ENCODE measurements at regions of chr3 and their contacts with region 1.

Region 1: DNA sequence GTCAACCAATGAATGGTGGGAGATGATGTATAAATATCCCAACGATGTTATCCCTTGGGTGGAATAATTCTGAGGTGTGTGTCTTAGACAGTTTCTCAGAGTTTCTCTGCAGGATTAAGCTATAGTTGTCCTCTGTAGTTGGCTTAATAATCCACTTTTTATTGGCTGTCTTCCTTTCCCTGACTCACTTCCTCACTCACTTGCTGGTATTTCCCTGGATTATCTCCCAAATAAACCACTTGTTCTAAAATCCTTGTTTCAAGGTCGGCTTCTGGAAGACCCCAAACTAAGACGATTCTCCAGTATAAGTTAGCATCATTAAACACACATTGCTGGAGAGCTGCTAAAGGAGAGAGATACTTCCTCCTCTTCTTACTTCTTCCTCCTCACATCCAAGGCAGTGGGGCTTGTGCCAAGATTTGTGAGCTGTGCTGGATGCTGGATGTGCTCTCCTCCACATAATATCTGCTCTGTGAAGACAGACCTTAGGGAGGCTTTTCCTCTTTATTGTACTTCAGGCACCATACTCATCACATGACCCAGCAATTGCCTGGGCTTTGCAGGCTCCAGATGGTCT is 22.5 kb upstream of the ROPN1 start:
- DNase-seq: no peak
- H3K4me3 ChIP-seq: no peak overlapping the region
- H3K27ac ChIP-seq: no peak overlapping the region
- H3K27me3 ChIP-seq: peaks cover 10% of the 10 kb centered on the region
- CTCF ChIP-seq: no peak

Region 2: DNA sequence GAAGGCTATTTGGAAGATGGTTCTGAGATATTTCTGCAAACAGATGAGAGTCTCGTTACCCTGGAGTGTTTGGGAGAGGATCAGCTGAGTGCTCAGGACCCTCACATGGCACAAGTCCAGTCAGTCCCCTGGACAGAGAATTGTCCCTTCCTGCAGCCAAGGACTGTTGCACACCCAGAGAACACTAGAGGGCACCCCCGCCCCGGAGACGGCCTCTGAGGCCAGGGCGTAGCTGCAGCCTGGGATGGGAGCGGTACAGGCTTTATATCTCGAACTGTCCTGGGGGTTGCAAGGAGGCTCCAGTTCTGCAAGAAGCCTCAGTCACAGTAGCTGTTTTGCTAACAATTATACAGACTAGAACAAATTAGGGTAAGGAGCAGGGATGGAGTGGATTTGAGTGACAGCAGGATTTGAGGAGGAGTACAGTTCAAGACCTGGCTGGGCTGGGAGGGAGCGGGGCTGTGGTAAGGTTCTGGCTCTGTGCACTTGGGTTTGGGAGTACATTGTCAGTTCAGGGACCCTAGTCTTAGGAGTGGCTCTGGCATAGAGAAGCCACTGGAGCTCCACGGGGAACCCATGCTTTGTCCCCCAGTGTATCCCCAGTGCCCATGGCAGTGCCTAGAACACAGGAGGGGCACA is 362.0 kb before region 1 on chr3:
- CTCF ChIA-PET with region 1: no interaction called
- POLR2A ChIA-PET with region 1: no interaction called
- DNase-seq: no peak
- H3K4me3 ChIP-seq: no peak overlapping the region
- H3K27ac ChIP-seq: peak overlapping the region; percentile 94
- H3K27me3 ChIP-seq: no peaks in the 10 kb centered on the region
- CTCF ChIP-seq: peak; percentile 88

Region 3: DNA sequence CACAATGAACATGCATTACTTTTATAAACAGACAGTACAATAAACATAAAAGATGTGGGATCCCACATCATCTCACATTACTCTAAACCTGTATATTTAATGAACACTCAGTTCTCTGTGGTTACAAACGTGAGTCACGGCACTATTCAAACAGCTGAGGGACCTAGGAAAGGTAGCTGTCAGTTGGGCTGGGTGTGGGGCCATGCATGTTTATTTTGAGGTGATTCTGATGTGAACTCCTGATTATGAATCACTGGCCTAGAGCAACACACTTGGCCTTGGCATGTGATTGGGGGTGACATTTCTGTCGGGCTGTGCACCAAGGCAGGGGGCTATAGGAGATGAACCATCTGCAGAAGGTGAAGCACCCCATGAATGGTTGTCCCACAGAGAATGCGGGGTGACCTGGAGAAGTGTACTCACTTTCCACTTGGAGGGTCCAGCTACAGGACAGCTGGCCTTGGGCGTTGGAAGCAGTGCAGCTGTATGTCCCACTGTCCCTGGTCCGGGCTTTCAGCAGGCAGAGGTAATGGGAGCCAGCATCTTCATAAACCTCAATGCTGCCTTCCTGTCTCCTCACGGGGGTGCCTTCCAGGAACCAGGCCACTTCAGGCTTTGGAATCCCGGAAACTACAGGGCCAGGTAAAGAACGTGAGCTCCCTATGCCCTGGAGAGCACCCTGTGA is 281.8 kb before region 1 on chr3:
- CTCF ChIA-PET with region 1: interaction called, 11 read pairs
- POLR2A ChIA-PET with region 1: no interaction called
- DNase-seq: peak; percentile 88
- H3K4me3 ChIP-seq: no peak overlapping the region
- H3K27ac ChIP-seq: peak overlapping the region; percentile 91
- H3K27me3 ChIP-seq: no peaks in the 10 kb centered on the region
- CTCF ChIP-seq: no peak

Region 4: GRCh38 chr3:123953735-123954134 is 60.7 kb before region 1 on chr3:
- CTCF ChIA-PET with region 1: no interaction called
- POLR2A ChIA-PET with region 1: no interaction called
- DNase-seq: no peak
- H3K4me3 ChIP-seq: no peak overlapping the region
- H3K27ac ChIP-seq: no peak overlapping the region
- H3K27me3 ChIP-seq: no peaks in the 10 kb centered on the region
- CTCF ChIP-seq: no peak

Region 5: DNA sequence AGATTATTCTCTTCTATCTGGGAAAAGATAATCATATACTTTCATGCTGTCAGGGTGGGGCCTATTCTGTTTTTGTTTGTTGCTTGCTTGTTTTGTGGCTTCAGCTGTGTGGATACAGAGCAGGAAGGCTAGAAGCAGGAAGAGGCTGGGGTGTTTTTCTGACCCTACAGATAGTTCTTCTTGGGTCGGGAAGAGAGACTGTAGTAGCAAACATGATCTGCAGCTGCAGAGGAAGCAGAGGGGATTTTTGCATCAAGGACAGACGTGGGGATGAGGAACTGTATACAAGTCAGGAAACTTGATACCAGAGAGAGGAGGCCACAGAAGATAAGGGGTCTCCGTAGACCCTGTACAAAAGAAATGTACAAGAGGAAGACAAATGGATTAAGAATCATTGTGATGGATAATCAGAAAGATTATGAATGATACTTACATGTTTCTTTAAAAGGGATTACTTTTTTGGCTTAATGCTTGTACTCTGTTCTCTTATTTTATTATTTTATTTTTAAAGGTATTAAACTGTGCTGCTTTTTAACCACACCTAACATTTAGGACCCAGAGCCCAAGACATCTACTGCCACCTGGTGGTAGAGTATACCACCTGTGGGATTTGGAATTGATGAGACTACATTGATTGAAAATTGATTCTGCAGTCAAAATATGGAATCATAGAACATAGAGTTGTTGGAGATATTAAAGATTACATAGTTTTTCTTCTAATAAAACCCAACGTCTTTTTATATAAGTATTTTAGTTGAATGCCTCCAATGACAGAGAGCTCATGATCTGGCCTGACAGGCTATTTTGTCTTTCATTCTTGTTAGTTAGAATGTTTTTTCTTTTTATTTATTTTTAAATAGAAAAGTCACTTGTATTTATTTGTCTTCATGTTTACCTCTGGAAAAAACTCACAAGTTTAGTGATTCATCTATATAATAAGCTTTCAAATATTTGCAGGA is 64.8 kb after region 1 on chr3:
- CTCF ChIA-PET with region 1: interaction called, 12 read pairs
- POLR2A ChIA-PET with region 1: no interaction called
- DNase-seq: no peak
- H3K4me3 ChIP-seq: no peak overlapping the region
- H3K27ac ChIP-seq: no peak overlapping the region
- H3K27me3 ChIP-seq: peaks cover 7% of the 10 kb centered on the region
- CTCF ChIP-seq: peak; percentile 81

Region 6: GRCh38 chr3:124281453-124282316 is 267.2 kb after region 1 on chr3:
- CTCF ChIA-PET with region 1: interaction called, 36 read pairs
- POLR2A ChIA-PET with region 1: no interaction called
- DNase-seq: no peak
- H3K4me3 ChIP-seq: no peak overlapping the region
- H3K27ac ChIP-seq: no peak overlapping the region
- H3K27me3 ChIP-seq: peaks cover 15% of the 10 kb centered on the region
- CTCF ChIP-seq: peak; percentile 70

Region 7: DNA sequence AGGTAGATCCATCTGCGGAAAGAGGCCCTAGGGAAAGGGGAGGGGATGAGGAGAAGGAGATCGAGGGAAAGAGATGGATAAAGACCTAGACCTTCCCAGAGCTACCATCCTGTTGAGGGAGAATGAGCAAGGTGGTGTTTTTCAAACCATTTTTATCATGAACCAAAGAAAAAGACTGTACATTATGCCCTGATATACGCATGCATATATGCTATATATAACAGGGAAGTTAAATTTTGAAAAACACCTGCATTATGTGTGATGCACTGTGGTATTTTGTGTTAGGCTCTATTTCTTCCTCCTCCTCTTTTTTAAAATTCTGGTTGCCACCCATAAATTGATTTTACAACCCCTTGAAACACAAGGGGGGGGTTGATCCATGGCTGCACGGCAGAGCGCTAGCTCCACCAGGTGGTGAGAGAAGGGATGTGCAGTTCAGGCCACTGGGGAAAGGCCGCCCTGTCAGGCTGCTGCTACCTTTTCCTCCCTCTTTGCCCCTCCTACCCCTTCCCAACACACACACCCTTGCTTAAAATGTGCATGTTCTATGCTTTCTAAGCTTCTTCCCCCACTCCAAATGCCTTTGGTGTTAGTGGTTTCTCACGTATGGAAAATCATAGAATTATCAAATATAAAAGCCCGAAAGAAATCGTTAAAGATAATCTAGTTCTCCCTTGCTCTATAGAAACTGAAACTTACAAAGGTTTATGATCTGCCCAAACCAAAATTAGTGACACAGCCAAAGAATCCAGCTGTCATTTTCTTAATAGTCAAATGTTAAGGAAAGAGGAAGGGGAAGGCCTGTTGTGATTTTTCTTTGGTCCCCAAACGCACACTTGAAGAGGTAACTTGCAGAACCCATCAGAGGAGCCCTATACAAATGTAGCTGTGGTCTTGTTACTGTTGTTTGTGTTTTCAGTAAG is 453.8 kb after region 1 on chr3:
- CTCF ChIA-PET with region 1: interaction called, 42 read pairs
- POLR2A ChIA-PET with region 1: no interaction called
- DNase-seq: no peak
- H3K4me3 ChIP-seq: no peak overlapping the region
- H3K27ac ChIP-seq: no peak overlapping the region
- H3K27me3 ChIP-seq: peaks cover 5% of the 10 kb centered on the region
- CTCF ChIP-seq: peak; percentile 99